ENCODE measurements at regions of chr17 and their contacts with region 1.

Region 1: GRCh38 chr17:30519707-30520106 is 42.5 kb downstream of the GOSR1 start:
- DNase-seq: peak; percentile 90
- H3K4me3 ChIP-seq: no peak overlapping the region
- H3K27ac ChIP-seq: peak overlapping the region; percentile 58
- H3K4me1 ChIP-seq: peaks cover 12% of the 10 kb centered on the region
- H3K27me3 ChIP-seq: no peaks in the 10 kb centered on the region
- CTCF ChIP-seq: no peak
- POLR2A ChIP-seq: no peak

Region 2: GRCh38 chr17:30605027-30605426 is 85.3 kb after region 1 on chr17:
- CTCF ChIA-PET with region 1: no interaction called
- POLR2A ChIA-PET with region 1: no interaction called
- dilution Hi-C with region 1: no loop called
- intact Hi-C with region 1: no loop called
- DNase-seq: no peak
- H3K4me3 ChIP-seq: no peak overlapping the region
- H3K27ac ChIP-seq: no peak overlapping the region
- H3K4me1 ChIP-seq: peaks cover 5% of the 10 kb centered on the region
- H3K27me3 ChIP-seq: no peaks in the 10 kb centered on the region
- CTCF ChIP-seq: no peak
- POLR2A ChIP-seq: no peak

Region 3: DNA sequence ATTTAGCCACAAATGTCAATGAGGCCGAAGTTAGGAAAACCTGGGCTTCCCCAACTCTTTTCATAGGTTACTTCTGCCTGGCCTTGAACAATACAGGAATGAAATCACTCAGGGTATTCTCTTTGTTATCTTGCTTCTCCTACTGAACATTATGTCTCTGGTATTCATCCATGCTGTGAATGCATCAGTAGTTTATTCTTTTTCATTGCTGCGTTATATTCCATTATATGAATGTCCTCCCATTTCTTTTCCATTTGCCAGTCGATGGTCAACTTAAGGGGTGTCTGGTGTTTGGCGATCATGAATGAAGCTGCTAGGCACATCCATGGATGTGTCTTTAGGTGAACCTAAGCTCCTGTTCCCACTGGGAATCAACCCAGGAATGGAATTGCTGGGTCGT is 176.5 kb after region 1 on chr17:
- CTCF ChIA-PET with region 1: no interaction called
- POLR2A ChIA-PET with region 1: no interaction called
- dilution Hi-C with region 1: no loop called
- intact Hi-C with region 1: loop called (anchors 10 kb)
- DNase-seq: no peak
- H3K4me3 ChIP-seq: no peak overlapping the region
- H3K27ac ChIP-seq: no peak overlapping the region
- H3K4me1 ChIP-seq: no peaks in the 10 kb centered on the region
- H3K27me3 ChIP-seq: peaks cover 0 to 3% of the 10 kb centered on the region in 2 experiments
- CTCF ChIP-seq: no peak
- POLR2A ChIP-seq: no peak